Esophagus squamous epithelium (tissue), 5 donors: ENCODE measurements at regions of chr17 and their contacts with region 1.

Region 1: GRCh38 chr17:64984851-64985521 is 65.7 kb upstream of the LRRC37A3 start:
- DNase-seq: no peak
- H3K4me3 ChIP-seq: no peak overlapping the region
- H3K27ac ChIP-seq: peak overlapping the region; percentile 73 to 88 (median 85)
- H3K4me1 ChIP-seq: peaks cover 9 to 50% (median 35%) of the 10 kb centered on the region in 3 donors
- H3K27me3 ChIP-seq: no peaks in the 10 kb centered on the region
- CTCF ChIP-seq: no peak
- POLR2A ChIP-seq: no peak

Region 2: DNA sequence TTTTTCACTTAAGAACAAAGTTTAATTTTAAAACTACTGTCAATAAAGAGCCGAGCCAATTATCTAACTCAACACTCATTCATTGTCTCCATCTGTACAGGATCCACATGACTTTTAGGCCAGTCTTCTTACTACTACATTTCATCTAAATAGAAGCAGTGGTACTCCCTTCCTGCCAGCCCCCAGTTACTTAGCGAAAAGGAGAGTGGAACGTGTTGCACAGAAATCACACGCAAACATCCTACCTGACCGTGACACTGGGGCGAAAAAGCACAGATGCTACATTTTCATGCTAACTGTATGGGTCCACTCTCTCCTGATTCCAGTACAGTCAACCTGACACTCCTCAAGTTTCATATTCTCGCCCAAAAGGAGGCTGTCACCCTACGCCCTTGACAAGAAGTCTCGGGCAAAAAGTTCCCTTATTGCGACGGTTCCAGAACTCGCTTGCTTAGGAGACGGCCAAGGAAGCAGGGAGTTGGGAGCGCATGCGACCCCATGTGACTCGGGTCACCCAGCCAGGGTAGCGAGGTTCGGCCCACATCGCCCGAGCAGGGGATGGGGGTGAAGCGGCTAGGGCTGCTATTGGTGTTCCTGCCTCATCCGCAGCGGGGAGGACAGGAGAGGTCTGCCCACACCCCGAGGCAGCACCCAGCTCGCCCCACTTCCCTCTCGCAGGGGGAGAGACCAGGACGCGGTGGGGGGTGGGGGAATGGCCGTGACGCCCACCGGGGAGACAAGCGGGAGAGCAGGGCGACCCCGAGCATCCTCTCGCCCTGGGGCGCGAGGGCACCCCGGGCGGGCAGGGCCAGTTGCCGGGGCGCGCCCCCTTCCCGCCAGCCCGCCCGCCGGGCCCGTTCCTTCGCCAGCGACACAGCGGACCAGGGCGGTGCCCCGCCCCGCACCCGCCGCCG is 70.6 kb after region 1 on chr17:
- intact Hi-C with region 1: loop called (anchors 10 kb)
- DNase-seq: no peak
- H3K4me3 ChIP-seq: peak overlapping the region; percentile 79 to 96 (median 89)
- H3K27ac ChIP-seq: peak overlapping the region; percentile 96 to 100 (median 98)
- H3K4me1 ChIP-seq: peaks cover 19 to 86% (median 66%) of the 10 kb centered on the region in 3 donors
- H3K27me3 ChIP-seq: no peaks in the 10 kb centered on the region
- CTCF ChIP-seq: no peak
- POLR2A ChIP-seq: peak in 2 of 4 donors; percentile 46 to 64